Naive thymus-derived CD4-positive, alpha-beta T cell (primary cell): ENCODE measurements at regions of chr12 and their contacts with region 1.

Region 1: DNA sequence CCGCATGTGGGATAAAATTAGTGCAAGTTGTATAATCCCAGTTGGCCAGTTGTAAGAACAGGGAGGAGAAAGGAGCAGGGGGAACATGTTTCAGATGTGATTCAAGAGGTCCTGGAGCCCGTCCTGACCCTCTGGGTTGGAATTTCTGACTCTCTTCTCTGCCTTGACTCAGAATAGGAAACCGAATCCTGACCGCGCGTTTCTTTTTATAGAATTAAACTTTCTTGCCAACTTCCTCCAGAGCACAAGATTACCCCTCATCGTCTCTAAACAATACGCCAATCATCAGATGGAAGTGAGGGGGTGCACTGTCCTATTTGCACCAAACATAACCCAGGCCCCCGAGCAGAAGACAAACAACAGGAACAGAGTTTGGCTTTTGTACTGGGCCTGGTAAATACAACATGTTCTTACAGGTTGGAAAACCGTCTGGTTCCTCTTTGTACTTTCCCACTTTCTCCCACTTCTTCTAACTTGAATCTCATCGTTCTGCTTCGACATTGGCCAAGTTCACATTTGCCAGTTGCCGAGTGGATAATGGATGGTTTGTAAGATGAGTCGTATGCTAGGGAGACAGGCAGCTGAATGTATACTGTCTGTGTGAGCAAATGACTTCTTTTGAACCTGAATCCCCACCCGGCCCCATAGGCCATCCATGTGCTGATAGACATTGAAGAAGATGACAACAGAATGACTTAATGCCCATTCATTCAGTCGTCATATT is 42.6 kb upstream of the MED13L start:
- DNase-seq: peak in 3 of 9 donors; percentile 7 to 34 (median 19)
- ATAC-seq: peak; percentile 41
- H3K4me3 ChIP-seq: no peak overlapping the region
- H3K4me3 Mint-ChIP-seq: peak overlapping the region; percentile 50 to 74 (median 66)
- H3K27ac ChIP-seq: no peak overlapping the region
- H3K27ac Mint-ChIP-seq: peak overlapping the region in 8 of 9 donors; percentile 14 to 69 (median 55)
- H3K4me1 ChIP-seq: peaks cover 0 to 15% of the 10 kb centered on the region in 2 donors
- H3K4me1 Mint-ChIP-seq: peaks cover 13 to 46% (median 38%) of the 10 kb centered on the region in 7 donors
- H3K27me3 ChIP-seq: no peaks in the 10 kb centered on the region
- H3K27me3 Mint-ChIP-seq: no peaks in the 10 kb centered on the region

Region 2: DNA sequence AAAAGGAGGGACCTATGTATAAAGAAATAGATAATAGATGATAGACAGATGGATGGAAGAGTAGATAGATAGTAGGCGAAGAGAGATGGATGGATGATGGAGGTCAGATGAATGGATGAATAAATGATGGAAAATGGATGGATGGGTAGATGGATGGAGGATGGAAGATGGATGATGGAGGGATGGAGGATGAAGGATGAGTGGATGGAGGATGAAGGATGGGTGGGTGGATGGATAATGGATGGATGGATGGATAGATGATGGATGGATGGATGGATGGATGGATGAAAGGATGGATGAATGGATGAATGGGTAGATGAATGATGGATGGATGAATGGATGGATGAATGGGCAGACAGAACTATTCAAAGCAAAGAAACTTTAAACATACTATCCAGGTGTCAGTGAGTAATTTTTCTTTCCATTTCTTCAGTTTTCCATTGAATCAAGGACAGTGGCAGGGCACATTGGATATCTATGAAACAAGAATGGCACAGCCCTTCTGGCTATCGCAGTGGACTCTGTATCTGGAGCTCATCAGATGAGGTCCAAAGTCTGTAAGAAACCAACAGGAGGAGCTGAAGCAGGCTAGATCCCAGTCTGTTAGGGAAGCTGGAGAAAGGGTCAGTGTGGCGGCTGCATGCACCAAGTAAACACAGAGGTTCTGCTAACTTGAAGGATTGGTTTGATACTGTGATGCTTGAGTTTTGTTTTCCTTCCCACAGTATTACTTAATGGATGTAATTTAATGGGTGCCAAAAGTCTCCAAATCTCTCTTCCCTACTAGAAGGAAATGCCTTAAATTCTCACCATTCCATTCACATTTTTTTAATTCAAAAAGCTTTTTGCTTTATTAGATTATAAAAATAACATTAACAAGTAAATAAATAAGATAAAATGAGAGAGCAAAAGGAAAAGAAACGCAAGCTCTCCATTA is 24.5 kb before region 1 on chr12:
- CTCF ChIA-PET with region 1: no interaction called
- POLR2A ChIA-PET with region 1: no interaction called
- intact Hi-C with region 1: no loop called
- DNase-seq: no peak
- ATAC-seq: no peak
- H3K4me3 ChIP-seq: no peak overlapping the region
- H3K4me3 Mint-ChIP-seq: no peak overlapping the region
- H3K27ac ChIP-seq: no peak overlapping the region
- H3K27ac Mint-ChIP-seq: no peak overlapping the region
- H3K4me1 ChIP-seq: no peaks in the 10 kb centered on the region
- H3K4me1 Mint-ChIP-seq: peaks cover 0 to 11% (median 0%) of the 10 kb centered on the region in 7 donors
- H3K27me3 ChIP-seq: no peaks in the 10 kb centered on the region
- H3K27me3 Mint-ChIP-seq: peaks cover 0 to 37% (median 4%) of the 10 kb centered on the region in 5 donors

Region 3: DNA sequence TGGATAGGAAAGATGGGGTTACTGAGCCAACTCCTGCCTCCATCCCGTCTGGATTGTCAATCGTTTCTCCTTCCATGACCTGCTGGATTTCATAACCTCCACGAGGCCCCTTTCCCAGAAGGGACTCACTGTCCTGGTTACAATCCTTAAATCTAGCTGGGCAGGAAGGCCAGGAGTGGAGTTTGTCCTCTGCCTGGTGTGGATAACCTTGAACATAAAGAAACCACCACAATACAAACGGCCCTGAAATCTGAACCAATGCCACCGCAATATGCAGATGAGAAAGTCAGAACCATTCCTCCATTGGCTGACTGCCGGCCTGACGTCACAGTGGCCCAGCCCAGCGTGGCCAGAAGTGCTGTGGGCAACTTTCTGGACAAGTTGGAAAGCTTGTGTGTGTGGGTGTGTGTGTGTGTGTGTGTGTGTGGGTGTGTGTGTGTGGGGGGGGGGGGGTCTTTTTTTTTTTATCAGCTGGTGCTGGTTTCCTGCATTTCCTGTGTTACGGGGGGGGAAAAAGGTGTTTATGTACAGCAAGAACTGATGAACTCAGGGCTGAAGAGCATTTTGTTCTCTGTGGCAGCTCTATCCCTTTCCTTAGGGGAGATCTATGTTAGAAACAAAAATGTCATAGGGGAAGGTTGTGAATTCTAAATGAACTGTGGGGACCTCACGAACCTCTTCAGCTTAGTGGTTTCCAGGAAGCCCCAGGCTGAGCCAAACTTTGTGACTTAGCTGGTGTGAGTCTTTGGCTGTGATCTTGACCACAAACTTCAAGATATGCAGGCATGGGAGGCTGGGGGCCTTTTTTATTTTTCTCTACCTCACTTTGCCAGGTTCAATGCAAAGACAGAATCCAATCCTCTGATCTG is 39.1 kb after region 1 on chr12:
- CTCF ChIA-PET with region 1: interaction called, 3 read pairs
- POLR2A ChIA-PET with region 1: no interaction called
- intact Hi-C with region 1: loop called (anchors 5 kb)
- DNase-seq: peak; percentile 45 to 74 (median 57)
- ATAC-seq: peak; percentile 93
- H3K4me3 ChIP-seq: peak overlapping the region; percentile 49
- H3K4me3 Mint-ChIP-seq: peak overlapping the region; percentile 77 to 88 (median 84)
- H3K27ac ChIP-seq: peak overlapping the region; percentile 58
- H3K27ac Mint-ChIP-seq: peak overlapping the region; percentile 75 to 90 (median 86)
- H3K4me1 ChIP-seq: peaks cover 15 to 27% of the 10 kb centered on the region in 2 donors
- H3K4me1 Mint-ChIP-seq: peaks cover 21 to 43% (median 31%) of the 10 kb centered on the region in 7 donors
- H3K27me3 ChIP-seq: no peaks in the 10 kb centered on the region
- H3K27me3 Mint-ChIP-seq: no peaks in the 10 kb centered on the region

Region 4: GRCh38 chr12:118073768-118074167 is 1753.7 kb after region 1 on chr12:
- CTCF ChIA-PET with region 1: no interaction called
- POLR2A ChIA-PET with region 1: no interaction called
- intact Hi-C with region 1: no loop called
- DNase-seq: no peak
- ATAC-seq: no peak
- H3K4me3 ChIP-seq: no peak overlapping the region
- H3K4me3 Mint-ChIP-seq: no peak overlapping the region
- H3K27ac ChIP-seq: no peak overlapping the region
- H3K27ac Mint-ChIP-seq: no peak overlapping the region
- H3K4me1 ChIP-seq: no peaks in the 10 kb centered on the region
- H3K4me1 Mint-ChIP-seq: peaks cover 0 to 1% (median 0%) of the 10 kb centered on the region in 7 donors
- H3K27me3 ChIP-seq: no peaks in the 10 kb centered on the region
- H3K27me3 Mint-ChIP-seq: no peaks in the 10 kb centered on the region